ENCODE measurements at regions of chr4 and their contacts with region 1.

Region 1: GRCh38 chr4:69167300-69167699 is 47.2 kb downstream of the UGT2B11 start:
- DNase-seq: no peak
- ATAC-seq: no peak
- H3K4me3 ChIP-seq: no peak overlapping the region
- H3K27ac ChIP-seq: no peak overlapping the region
- H3K4me1 ChIP-seq: peaks cover 41% of the 10 kb centered on the region
- H3K27me3 ChIP-seq: no peaks in the 10 kb centered on the region
- CTCF ChIP-seq: no peak
- EP300 ChIP-seq: no peak
- POLR2A ChIP-seq: no peak
- RAD21 ChIP-seq: no peak

Region 2: DNA sequence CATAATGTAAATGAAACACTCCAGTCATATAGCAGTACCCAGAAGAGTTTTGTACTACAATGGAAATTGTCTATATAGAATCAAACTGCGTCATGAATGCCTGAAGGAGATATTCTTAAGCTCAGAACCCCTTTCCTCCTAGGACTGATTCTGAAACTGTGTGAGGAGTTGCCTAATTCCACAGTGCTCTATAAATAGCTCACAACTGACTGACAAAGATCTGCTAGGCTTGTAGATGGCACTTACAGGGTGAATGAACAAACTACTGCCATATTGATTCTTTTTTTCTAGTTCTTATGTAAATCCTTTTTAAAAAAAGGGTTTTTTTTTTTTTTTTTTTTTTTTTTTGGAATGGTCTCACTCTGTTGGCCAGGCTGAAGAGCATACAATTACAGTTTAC is 561.1 kb before region 1 on chr4:
- CTCF ChIA-PET with region 1: no interaction called
- POLR2A ChIA-PET with region 1: no interaction called
- in situ Hi-C with region 1: no loop called
- intact Hi-C with region 1: no loop called
- DNase-seq: no peak
- ATAC-seq: no peak
- H3K4me3 ChIP-seq: no peak overlapping the region
- H3K27ac ChIP-seq: no peak overlapping the region
- H3K4me1 ChIP-seq: no peaks in the 10 kb centered on the region
- H3K27me3 ChIP-seq: no peaks in the 10 kb centered on the region
- CTCF ChIP-seq: no peak
- EP300 ChIP-seq: no peak
- POLR2A ChIP-seq: no peak
- RAD21 ChIP-seq: no peak

Region 3: DNA sequence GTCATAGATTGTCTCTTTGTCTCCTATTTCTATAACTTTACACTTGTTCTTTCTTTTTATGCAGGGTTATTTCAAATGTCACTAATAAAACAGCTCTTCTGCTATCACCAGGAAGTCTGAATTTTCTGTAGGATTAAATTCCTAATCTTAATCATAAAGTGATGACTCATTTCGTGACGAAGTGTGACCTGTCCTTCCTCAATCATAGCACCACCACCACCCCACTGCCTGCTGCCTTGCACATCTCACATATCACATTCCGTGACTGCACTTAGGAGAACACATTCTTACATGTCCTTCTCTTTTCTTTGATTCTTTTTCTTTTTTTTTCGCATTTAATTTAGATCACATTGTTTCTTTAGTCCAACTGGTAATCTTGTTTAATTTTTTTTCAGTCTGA is 128.7 kb before region 1 on chr4:
- CTCF ChIA-PET with region 1: no interaction called
- POLR2A ChIA-PET with region 1: no interaction called
- in situ Hi-C with region 1: no loop called
- intact Hi-C with region 1: no loop called
- DNase-seq: no peak
- ATAC-seq: no peak
- H3K4me3 ChIP-seq: no peak overlapping the region
- H3K27ac ChIP-seq: no peak overlapping the region
- H3K4me1 ChIP-seq: no peaks in the 10 kb centered on the region
- H3K27me3 ChIP-seq: no peaks in the 10 kb centered on the region
- CTCF ChIP-seq: no peak
- EP300 ChIP-seq: no peak
- POLR2A ChIP-seq: no peak
- RAD21 ChIP-seq: no peak

Region 4: GRCh38 chr4:69095301-69095731 is 72.0 kb before region 1 on chr4:
- CTCF ChIA-PET with region 1: no interaction called
- POLR2A ChIA-PET with region 1: no interaction called
- in situ Hi-C with region 1: no loop called
- intact Hi-C with region 1: loop called (anchors 5 kb)
- DNase-seq: peak; percentile 89
- ATAC-seq: peak; percentile 72
- H3K4me3 ChIP-seq: no peak overlapping the region; a peak in 1 of 6 replicates
- H3K27ac ChIP-seq: peak overlapping the region; percentile 72
- H3K4me1 ChIP-seq: peaks cover 61% of the 10 kb centered on the region
- H3K27me3 ChIP-seq: no peaks in the 10 kb centered on the region
- CTCF ChIP-seq: no peak
- EP300 ChIP-seq: peak in 1 of 2 experiments; percentile 97; a peak in 2 of 4 replicates
- POLR2A ChIP-seq: no peak
- RAD21 ChIP-seq: no peak